WTC11 (cell line): ENCODE measurements at regions of chrX and their contacts with region 1.

Region 1: DNA sequence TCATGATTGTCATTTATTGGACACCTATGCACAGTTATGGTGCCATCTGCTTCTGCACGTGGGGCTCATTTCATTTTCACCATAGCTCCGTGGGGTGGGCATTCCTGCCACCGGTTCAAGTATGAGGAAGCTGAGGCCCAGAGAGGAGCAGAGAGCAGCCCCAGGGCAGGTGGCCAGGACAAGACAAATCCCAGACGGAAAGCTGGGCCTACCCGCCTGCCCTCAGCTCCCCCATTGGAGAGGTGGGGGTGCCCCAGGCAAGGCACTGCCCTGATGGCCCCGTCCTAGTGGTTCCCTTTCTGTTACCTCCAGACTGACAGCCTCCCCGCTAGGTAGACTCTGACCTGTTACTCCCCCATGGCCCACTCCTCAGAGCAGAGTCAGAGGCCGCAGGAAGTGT is 73.6 kb upstream of the HUWE1 start:
- DNase-seq: no peak
- ATAC-seq: no peak
- H3K4me3 Mint-ChIP-seq: no peak overlapping the region
- H3K27ac Mint-ChIP-seq: no peak overlapping the region
- H3K4me1 Mint-ChIP-seq: peaks cover 16% of the 10 kb centered on the region
- H3K27me3 Mint-ChIP-seq: no peaks in the 10 kb centered on the region
- CTCF ChIP-seq: no peak

Region 2: GRCh38 chrX:53116101-53116500 is 644.0 kb before region 1 on chrX:
- CTCF ChIA-PET with region 1: no interaction called
- POLR2A ChIA-PET with region 1: interaction called, 11 read pairs
- DNase-seq: no peak
- ATAC-seq: no peak
- H3K4me3 Mint-ChIP-seq: no peak overlapping the region
- H3K27ac Mint-ChIP-seq: peak overlapping the region; percentile 10; the same call in 1 of the 2 replicates
- H3K4me1 Mint-ChIP-seq: peaks cover 5% of the 10 kb centered on the region
- H3K27me3 Mint-ChIP-seq: no peaks in the 10 kb centered on the region
- CTCF ChIP-seq: no peak

Region 3: DNA sequence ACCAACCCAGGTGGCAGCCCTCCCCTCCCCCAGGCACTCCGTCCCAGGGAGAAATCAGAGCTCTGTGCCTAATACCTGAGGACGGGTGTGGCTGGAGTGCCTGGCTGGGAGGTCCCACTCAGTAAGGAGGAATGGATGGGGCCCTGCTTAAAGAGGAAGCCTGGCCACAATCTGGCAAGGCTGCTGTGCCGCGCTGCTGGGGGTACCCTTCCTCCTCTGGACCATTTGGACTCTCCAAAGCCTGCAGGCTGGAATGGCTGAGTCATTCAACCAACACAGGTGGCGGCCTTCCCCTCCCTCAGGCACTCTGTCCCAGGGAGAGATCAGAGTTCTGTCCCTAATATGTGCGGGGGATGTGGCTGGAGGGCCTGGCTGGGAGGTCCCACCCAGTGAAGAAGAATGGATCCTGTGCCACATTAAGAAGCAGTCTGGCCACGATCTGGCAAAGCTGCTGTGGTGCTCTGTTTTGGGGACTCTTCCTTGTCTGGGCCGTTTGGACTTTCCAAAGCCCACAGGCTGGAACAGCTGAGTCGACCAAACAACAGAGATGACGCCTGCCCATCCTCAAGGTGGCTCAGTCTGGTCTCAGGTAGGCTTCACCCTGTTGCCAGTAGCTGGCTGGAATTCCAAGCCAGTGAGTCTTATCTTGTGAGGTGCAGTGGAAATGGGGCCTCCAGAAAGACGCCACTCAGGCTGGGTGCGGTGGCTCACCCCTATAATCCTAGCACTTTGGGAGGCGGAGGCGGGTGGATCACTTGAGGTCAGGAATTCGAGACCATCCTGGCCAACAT is 53.8 kb after region 1 on chrX:
- CTCF ChIA-PET with region 1: no interaction called
- POLR2A ChIA-PET with region 1: no interaction called
- DNase-seq: no peak
- ATAC-seq: no peak
- H3K4me3 Mint-ChIP-seq: no peak overlapping the region
- H3K27ac Mint-ChIP-seq: no peak overlapping the region
- H3K4me1 Mint-ChIP-seq: peaks cover 12% of the 10 kb centered on the region
- H3K27me3 Mint-ChIP-seq: no peaks in the 10 kb centered on the region
- CTCF ChIP-seq: no peak